Esophagus squamous epithelium (tissue), 5 donors: ENCODE measurements at regions of chr17 and their contacts with region 1.

Region 1: DNA sequence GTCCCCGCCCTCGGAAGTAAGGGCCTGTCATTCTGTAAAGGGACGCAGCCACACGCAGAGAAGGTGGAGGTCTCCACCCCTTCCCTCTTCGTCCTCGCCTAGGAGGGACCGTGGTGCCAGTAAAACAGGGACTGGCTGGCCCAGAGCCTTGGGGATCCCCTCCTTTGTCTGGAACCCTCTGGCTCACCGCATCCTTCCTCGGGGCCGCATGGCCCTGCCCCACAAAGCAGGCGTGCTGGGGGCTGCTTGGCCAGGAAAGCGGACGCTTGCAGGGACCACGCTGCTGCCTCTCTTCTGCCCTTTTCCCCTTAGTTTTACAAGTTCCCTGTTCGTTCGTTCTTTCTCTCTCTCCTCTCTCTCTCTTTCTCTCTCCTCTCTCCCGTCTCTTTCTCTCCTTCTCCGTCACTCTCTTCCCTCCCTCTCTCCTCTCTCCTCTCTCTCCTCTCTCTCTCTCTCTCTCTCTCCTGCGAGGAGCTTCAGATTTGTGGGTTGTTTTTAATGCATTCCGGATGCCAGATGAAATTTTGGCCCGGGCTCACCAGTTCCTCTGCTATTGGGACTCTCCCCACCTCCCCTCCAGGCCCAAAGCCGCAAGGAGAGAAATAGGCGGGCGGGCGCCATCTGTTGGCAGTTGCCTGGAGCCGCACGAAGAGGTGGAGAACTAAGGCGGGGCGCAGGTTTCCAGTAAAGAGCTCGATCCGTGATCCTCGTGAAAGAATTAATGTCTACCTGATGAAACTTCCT is 35.1 kb upstream of the CDRT4 start:
- DNase-seq: peak; percentile 20
- H3K4me3 ChIP-seq: peak overlapping the region in 3 of 4 donors; percentile 33 to 59 (median 37)
- H3K27ac ChIP-seq: peak overlapping the region; percentile 57 to 92 (median 84)
- H3K4me1 ChIP-seq: peaks cover 4 to 25% (median 6%) of the 10 kb centered on the region in 3 donors
- H3K27me3 ChIP-seq: no peaks in the 10 kb centered on the region
- CTCF ChIP-seq: peak; percentile 53 to 91 (median 82)
- POLR2A ChIP-seq: no peak

Region 2: DNA sequence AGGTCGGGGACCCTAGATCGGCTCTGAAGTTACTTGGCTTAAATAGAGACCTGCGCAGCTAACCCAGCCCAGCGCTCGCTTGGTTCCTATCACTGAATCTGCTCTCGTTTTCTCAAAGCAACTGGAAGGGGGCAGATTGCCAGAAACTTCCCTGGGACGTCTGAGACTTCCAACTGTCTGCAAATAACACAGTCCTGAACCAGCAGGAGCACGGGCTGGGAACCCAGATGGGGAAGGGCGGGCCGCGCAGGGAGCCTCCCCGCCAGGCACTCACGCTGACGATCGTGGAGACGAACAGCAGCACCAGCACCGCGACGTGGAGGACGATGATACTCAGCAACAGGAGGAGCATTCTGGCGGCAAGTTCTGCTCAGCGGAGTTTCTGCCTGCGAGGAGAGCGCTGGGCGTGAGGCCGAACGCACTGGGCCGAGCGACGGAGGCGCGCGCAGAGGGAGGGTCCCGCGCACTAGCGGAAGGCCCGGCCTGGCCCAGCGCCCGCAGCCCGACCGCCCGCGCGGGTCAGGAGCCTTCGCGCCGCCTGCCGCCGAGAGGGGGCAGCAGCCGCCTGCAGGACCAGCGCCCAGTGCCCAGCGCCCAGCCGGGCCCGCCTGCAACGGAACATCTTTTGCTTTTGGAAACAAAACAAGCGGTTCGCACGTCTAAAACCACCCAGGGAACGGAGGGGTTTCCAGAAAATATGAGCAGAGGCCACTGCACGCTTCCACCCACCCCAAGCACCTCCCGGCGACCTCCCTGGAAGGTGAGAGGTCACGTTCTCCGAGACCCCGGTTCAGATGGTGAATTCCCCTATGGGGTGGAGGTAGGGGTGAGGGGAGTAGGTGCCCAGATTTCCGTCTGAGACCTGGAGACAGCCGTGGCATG is 241.9 kb before region 1 on chr17:
- intact Hi-C with region 1: loop called (anchors 5 kb)
- DNase-seq: no peak
- H3K4me3 ChIP-seq: peak overlapping the region; percentile 34 to 77 (median 62)
- H3K27ac ChIP-seq: peak overlapping the region; percentile 85 to 98 (median 94)
- H3K4me1 ChIP-seq: peaks cover 10 to 92% (median 47%) of the 10 kb centered on the region in 3 donors
- H3K27me3 ChIP-seq: peaks cover 0 to 72% (median 4%) of the 10 kb centered on the region in 4 donors
- CTCF ChIP-seq: peak; percentile 48 to 94 (median 90)
- POLR2A ChIP-seq: peak in 2 of 4 donors; percentile 26 to 29

Region 3: GRCh38 chr17:15398736-15399331 is 103.7 kb before region 1 on chr17:
- intact Hi-C with region 1: no loop called
- DNase-seq: no peak
- H3K4me3 ChIP-seq: no peak overlapping the region
- H3K27ac ChIP-seq: peak overlapping the region in 3 of 4 donors; percentile 18 to 58 (median 42)
- H3K4me1 ChIP-seq: peaks cover 4 to 28% (median 12%) of the 10 kb centered on the region in 3 donors
- H3K27me3 ChIP-seq: peaks cover 0 to 12% (median 0%) of the 10 kb centered on the region in 4 donors
- CTCF ChIP-seq: no peak
- POLR2A ChIP-seq: no peak